ENCODE measurements at regions of chr18 and their contacts with region 1.

Region 1: DNA sequence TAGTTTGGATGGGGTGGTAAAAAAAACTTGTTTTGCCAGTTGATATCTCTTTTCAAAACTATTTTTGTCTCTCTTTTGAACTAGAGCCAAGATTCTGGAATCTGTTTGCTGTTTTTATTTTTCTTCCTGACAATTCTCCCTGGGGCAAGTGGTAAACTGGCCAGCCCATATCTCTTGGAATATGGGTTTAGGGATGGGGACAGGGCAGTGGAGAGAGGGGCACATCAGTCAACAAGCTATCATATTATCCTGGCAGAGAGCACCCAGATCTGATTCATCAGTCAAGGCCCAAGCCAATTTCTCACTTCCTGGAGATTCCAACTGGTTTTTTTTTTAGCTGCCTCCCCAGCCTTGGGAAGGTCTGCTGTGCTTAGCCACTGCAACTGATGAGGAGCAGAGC is 52.3 kb downstream of the ARHGAP28 start:
- DNase-seq: no peak
- ATAC-seq: no peak
- H3K4me3 ChIP-seq: no peak overlapping the region
- H3K4me3 Mint-ChIP-seq: no peak overlapping the region
- H3K27ac ChIP-seq: no peak overlapping the region
- H3K27ac Mint-ChIP-seq: no peak overlapping the region
- H3K4me1 ChIP-seq: no peaks in the 10 kb centered on the region
- H3K4me1 Mint-ChIP-seq: no peaks in the 10 kb centered on the region
- H3K27me3 ChIP-seq: no peaks in the 10 kb centered on the region
- H3K27me3 Mint-ChIP-seq: peaks cover 0 to 4% of the 10 kb centered on the region in 2 donors

Region 2: DNA sequence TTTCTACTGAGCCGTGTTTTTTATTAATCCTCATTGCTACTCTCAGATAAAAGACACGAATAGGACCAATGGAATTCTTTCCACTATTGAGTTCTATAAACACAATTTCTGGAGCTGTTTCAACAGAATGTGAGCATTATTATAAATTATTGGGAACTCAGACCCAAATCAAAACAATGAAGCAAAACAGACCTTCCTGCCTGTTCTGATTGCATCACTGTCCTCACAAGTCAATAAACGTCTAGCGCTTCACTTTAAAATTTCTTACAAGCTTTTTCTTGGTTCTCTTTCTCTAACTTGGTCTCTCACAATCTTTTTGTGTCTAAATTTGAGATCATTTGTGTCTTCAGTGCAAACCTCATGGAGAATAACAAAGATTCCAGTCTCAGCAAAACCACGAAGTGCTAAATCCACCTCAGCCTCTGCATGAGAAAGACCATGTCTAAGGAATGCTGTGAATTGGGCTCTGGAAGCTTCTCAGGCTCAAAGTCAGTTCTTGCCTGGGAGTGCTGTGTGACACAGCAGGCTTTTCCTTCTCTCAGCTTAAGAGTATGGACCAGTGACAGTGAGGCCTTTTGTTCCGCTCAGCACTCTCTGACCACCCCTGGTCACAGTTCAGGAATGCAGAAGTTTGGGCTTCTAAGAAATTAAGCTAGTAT is 29.5 kb before region 1 on chr18:
- CTCF ChIA-PET with region 1: no interaction called
- POLR2A ChIA-PET with region 1: interaction called in 1 of 2 experiments, 13 read pairs
- DNase-seq: no peak
- ATAC-seq: no peak
- H3K4me3 ChIP-seq: no peak overlapping the region
- H3K4me3 Mint-ChIP-seq: no peak overlapping the region
- H3K27ac ChIP-seq: no peak overlapping the region
- H3K27ac Mint-ChIP-seq: no peak overlapping the region
- H3K4me1 ChIP-seq: no peaks in the 10 kb centered on the region
- H3K4me1 Mint-ChIP-seq: no peaks in the 10 kb centered on the region
- H3K27me3 ChIP-seq: no peaks in the 10 kb centered on the region
- H3K27me3 Mint-ChIP-seq: no peaks in the 10 kb centered on the region

Region 3: DNA sequence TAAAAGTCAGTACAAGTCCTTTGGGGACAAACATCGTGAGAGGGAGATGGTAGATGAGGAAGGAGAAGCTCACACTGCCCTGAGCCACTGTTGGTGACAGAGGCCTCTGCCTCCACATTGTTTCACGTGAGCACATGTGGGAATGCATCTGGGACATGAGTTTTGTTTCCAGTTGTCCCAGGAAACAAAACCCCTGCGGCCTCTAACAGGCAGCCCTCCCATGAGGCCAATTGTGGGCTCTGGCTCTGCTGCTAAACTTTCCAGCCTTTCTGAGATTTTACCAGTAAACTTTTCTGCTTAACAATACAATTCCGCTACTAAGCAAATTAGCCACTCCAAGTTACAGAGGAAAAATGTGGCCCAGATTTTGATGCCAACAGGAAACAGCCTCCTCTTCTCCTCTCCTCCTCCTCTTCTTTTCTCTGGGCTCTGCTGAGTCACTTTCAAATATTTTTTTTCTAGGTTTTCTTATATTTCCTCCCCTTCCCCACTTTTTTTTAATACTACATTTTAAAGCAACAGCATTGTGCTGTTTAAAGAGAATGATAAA is 425.7 kb after region 1 on chr18:
- CTCF ChIA-PET with region 1: no interaction called
- POLR2A ChIA-PET with region 1: no interaction called
- DNase-seq: no peak
- ATAC-seq: no peak
- H3K4me3 ChIP-seq: no peak overlapping the region
- H3K4me3 Mint-ChIP-seq: no peak overlapping the region
- H3K27ac ChIP-seq: no peak overlapping the region
- H3K27ac Mint-ChIP-seq: no peak overlapping the region
- H3K4me1 ChIP-seq: no peaks in the 10 kb centered on the region
- H3K4me1 Mint-ChIP-seq: no peaks in the 10 kb centered on the region
- H3K27me3 ChIP-seq: no peaks in the 10 kb centered on the region
- H3K27me3 Mint-ChIP-seq: no peaks in the 10 kb centered on the region